Common myeloid progenitor, CD34-positive (primary cell): ENCODE measurements at regions of chr6 and their contacts with region 1.

Region 1: GRCh38 chr6:17098538-17098937 is 3.3 kb upstream of the STMND1 start:
- DNase-seq: no peak
- H3K4me3 ChIP-seq: no peak overlapping the region
- H3K27ac ChIP-seq: no peak overlapping the region
- H3K4me1 ChIP-seq: peaks cover 0 to 13% (median 9%) of the 10 kb centered on the region in 4 experiments
- H3K27me3 ChIP-seq: peaks cover 7 to 49% (median 24%) of the 10 kb centered on the region in 5 experiments

Region 2: GRCh38 chr6:17086469-17086868 is 12.1 kb before region 1 on chr6:
- CTCF ChIA-PET with region 1: interaction called, 11 read pairs
- POLR2A ChIA-PET with region 1: no interaction called
- DNase-seq: peak; percentile 41 to 58 (median 48)
- H3K4me3 ChIP-seq: no peak overlapping the region
- H3K27ac ChIP-seq: no peak overlapping the region
- H3K4me1 ChIP-seq: no peaks in the 10 kb centered on the region
- H3K27me3 ChIP-seq: peaks cover 0 to 4% (median 2%) of the 10 kb centered on the region in 5 experiments